ENCODE measurements at regions of chr5 and their contacts with region 1.

Region 1: GRCh38 chr5:159987031-159987674 is 21.8 kb upstream of the TTC1 start:
- DNase-seq: peak; percentile 72
- ATAC-seq: peak; percentile 99
- H3K4me3 Mint-ChIP-seq: peak overlapping the region; percentile 70
- H3K27ac Mint-ChIP-seq: no peak overlapping the region
- H3K4me1 Mint-ChIP-seq: peaks cover 7% of the 10 kb centered on the region
- H3K27me3 Mint-ChIP-seq: peaks cover 14% of the 10 kb centered on the region
- CTCF ChIP-seq: no peak

Region 2: DNA sequence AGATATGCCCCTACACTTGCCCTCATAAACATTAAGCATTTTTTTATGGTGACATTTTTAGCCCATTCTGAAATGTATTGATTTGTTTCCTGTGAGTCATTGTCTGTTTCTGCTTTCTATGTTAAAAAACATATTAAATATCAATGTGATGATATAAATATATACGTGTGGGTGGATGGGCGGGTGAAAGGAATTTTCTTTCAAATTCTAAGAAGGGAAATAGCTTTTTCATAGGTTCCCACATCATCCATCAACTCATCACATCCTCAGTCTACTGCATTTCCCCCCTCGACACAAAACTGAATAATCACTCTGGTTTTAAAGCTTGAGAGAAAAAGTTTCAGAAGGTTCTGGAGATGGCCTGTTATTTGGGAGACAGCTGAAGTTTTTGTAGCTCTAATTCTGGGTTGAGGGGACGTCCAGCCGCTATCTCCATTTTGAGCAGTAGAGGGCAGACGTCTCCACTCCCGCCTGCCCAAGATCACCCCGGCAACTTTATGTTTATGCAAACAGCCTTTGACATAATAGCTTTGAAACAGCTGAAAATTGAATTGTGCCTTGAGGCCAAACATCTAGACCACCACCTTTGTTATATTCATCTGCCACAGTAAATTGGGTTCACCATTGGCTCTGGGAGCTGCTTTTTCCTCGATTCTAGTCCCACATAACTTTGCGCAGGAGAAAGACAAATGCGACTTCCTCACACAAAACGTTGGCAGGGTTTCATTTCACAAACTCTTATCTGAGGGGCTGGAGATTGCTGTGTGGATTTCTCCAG is 1912.0 kb before region 1 on chr5:
- CTCF ChIA-PET with region 1: interaction called, 6 read pairs
- POLR2A ChIA-PET with region 1: no interaction called
- intact Hi-C with region 1: loop called (anchors 1 kb)
- DNase-seq: peak; percentile 48
- ATAC-seq: peak; percentile 95
- H3K4me3 Mint-ChIP-seq: peak overlapping the region; percentile 42
- H3K27ac Mint-ChIP-seq: peak overlapping the region; percentile 73
- H3K4me1 Mint-ChIP-seq: peaks cover 20% of the 10 kb centered on the region
- H3K27me3 Mint-ChIP-seq: peaks cover 2% of the 10 kb centered on the region
- CTCF ChIP-seq: no peak

Region 3: DNA sequence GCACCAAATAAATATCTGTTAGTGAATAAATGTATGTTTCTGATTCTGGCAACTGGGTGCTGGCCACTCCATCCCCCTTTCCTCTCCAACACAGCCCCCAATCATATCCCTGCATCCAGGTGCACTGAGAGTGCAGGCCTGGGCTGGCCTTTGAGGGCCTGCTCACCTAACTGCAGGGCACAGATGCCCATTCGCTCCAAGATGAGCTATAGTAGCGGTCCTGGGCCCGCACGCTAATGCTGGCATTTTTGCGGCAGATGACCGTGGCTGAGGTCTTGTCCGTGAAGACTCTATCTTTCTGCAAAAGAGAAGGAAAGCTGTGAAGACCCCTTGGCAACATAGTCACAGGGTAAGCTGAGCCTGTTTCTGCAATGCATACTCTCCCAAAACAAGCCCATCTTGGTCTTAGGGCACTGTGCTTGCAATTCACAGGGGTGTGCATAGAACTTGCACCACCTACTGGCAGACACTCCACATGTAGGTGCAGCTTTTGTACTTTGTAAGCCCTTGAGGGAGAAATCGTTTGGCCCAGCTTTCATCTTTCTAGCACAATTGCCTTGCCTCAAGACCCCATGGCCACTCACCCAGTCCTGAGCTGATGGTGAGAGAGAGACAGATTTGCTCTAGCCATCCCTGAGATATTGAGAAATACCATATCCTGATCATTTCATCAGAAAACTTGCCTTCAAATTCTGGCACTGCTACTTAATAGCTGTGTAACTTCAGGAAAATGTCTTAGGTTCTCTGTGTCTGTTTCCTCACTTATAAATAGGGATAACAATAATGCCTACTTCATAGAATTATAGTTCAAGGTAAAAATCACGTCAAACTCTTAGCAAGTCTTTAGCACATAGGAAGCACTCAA is 670.4 kb before region 1 on chr5:
- CTCF ChIA-PET with region 1: interaction called, 13 read pairs
- POLR2A ChIA-PET with region 1: no interaction called
- intact Hi-C with region 1: no loop called
- DNase-seq: no peak
- ATAC-seq: peak; percentile 67
- H3K4me3 Mint-ChIP-seq: no peak overlapping the region
- H3K27ac Mint-ChIP-seq: no peak overlapping the region
- H3K4me1 Mint-ChIP-seq: no peaks in the 10 kb centered on the region
- H3K27me3 Mint-ChIP-seq: peaks cover 6% of the 10 kb centered on the region
- CTCF ChIP-seq: no peak

Region 4: DNA sequence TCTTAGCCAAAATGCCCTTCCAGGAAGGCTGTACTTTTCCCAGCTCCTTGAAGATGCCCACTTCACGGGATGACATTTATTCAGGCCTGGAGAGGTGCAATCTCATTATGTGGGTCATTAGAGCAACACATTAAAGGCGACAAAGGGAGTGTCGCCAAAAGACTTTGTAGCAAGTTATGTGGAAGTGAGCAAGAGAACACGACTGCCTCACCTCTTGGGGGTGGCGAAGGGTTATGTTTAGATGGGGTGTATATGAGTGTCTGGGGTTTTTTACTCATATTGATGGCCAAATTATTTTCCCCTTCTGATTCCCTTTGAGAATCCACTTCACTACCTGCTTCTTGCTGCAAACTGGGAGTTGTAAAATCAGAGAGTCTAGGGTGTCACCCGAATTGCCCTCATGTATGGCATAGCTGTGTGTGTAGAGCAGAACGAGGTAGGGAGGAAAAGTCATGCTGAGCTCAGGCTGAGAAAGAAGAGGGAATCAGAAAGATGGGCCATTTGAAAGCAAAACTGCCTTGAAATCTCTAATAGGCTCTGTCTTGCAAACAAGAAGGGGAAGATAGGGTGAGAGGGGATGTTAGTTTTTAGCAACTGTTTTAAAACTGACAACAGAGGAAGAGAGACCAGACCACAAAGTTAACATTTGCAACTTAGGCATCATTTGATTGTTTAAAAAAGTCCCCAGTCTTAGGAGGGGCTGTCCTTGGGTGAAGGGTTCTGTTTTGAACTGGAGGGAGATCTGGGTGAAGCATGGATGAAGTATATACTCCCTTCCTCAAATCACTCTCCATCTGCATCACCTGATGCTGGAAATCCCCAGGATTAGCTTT is 559.8 kb before region 1 on chr5:
- CTCF ChIA-PET with region 1: interaction called, 10 read pairs
- POLR2A ChIA-PET with region 1: no interaction called
- intact Hi-C with region 1: no loop called
- DNase-seq: no peak
- ATAC-seq: peak; percentile 81
- H3K4me3 Mint-ChIP-seq: peak overlapping the region; percentile 76
- H3K27ac Mint-ChIP-seq: peak overlapping the region; percentile 96
- H3K4me1 Mint-ChIP-seq: peaks cover 64% of the 10 kb centered on the region
- H3K27me3 Mint-ChIP-seq: no peaks in the 10 kb centered on the region
- CTCF ChIP-seq: no peak

Region 5: DNA sequence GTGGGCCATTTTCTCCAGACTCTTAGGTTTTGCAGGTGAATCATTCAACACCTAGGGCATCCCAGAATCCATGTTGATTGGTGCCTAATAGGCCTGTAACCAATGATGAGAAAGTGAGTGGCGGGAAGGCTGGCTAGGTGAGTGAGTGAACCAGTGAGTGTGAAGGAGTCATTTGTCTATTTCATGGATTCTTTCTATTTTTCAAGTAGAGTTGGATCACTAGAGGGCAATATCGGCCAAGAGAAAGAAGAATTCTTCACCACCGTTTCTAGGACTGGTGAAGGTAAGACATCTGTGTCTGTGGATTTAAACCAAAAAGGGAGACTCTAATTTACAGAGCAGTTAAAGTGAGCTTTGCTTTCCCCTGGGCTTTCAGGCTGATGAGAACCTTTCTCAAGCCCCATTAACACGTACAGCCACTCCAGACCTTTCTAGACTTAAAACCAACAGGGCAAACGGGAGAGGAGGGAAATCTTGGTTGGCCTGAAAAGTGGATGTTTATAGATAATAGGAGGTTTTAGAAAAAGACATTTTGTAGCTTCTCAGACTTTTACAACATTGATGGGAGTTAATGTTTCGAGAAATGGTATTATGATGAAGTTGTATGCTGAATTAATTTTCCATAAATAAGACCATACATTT is 542.6 kb before region 1 on chr5:
- CTCF ChIA-PET with region 1: interaction called, 20 read pairs
- POLR2A ChIA-PET with region 1: interaction called, 4 read pairs
- intact Hi-C with region 1: loop called (anchors 1 kb)
- DNase-seq: no peak
- ATAC-seq: peak; percentile 67
- H3K4me3 Mint-ChIP-seq: no peak overlapping the region
- H3K27ac Mint-ChIP-seq: no peak overlapping the region
- H3K4me1 Mint-ChIP-seq: peaks cover 6% of the 10 kb centered on the region
- H3K27me3 Mint-ChIP-seq: no peaks in the 10 kb centered on the region
- CTCF ChIP-seq: no peak

Region 6: GRCh38 chr5:159515909-159516415 is 471.2 kb before region 1 on chr5:
- CTCF ChIA-PET with region 1: interaction called, 7 read pairs
- POLR2A ChIA-PET with region 1: no interaction called
- intact Hi-C with region 1: loop called (anchors 1 kb)
- DNase-seq: peak; percentile 58
- ATAC-seq: peak; percentile 99
- H3K4me3 Mint-ChIP-seq: no peak overlapping the region
- H3K27ac Mint-ChIP-seq: no peak overlapping the region
- H3K4me1 Mint-ChIP-seq: peaks cover 7% of the 10 kb centered on the region
- H3K27me3 Mint-ChIP-seq: no peaks in the 10 kb centered on the region
- CTCF ChIP-seq: peak; percentile 19

Region 7: DNA sequence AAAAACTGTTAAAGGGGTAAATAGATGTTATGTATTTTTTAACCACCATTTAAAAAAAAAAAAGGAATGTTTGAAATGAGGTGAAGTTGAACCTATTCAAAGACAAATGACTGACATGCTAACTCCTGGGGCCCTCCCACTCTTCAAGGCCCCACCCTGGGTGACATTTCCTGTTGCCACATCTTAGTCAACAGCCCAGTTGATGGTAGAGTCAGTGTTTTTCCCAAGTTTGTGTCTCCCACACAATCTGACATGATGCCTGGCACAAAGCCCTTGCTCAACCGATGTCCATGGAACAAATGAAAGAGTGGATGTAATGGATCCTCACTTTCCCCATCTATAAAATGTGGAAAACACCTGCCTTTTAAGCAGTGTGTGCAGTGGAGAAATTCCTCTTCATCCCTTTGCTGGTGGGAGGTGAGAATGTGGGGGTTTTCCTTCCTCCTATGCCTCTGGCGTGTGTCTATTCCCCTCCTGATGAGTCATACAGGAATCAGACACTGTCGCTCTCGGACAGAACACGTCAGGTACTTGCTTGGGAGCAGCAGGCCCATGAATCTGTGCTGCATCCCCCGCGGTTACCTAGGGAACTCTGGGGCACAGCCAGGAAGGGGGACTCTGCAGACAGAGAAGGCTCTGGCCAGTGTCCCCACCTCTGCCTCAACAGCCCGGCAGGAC is 84.6 kb before region 1 on chr5:
- CTCF ChIA-PET with region 1: no interaction called
- POLR2A ChIA-PET with region 1: no interaction called
- intact Hi-C with region 1: no loop called
- DNase-seq: no peak
- ATAC-seq: no peak
- H3K4me3 Mint-ChIP-seq: no peak overlapping the region
- H3K27ac Mint-ChIP-seq: no peak overlapping the region
- H3K4me1 Mint-ChIP-seq: no peaks in the 10 kb centered on the region
- H3K27me3 Mint-ChIP-seq: peaks cover 30% of the 10 kb centered on the region
- CTCF ChIP-seq: no peak

Region 8: DNA sequence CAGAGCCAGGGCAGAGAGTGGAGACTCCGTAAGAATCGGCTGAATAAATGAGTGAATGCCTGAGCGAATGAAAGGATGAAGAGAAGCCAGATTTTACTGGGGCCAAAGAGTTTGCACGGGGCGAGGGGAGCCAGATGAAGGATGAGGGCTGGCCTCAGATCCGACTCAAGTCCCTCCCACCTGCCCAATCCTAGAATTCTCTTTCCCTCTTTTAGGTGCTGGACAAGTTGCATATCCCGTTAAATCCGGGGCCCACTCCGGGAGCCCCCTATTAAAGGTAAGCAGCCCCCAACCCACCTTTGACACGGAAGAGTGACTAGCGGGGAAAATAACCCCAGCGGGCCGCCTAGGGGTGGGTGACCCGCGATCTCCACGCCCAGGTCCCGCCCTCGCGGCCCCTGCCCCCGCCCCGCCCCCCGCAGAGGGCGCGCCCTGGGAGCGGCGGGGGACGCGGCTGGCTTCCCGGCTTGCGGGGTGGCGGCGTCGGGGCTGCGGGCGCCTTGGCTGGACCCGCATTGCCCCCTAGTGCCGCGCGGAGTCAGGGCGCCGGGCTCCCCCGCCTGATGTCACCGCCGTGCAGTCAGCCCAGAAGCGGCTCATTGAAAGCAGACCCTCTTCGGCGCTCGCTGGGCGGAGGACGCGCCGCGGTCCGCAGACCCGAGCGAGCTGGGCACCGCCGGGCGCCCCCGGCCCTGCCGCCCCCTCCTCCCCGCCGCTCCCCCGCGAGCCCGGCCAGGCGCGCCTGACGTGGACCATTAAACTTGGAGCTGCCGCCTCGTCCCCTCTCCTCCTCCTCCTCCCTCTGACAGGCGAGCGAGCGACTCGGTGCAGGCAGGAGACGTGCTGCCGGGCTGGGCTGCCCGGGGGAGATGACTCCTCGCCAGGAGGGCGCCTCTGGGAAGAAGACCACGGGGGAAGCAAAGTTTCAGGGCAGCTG is 71.0 kb before region 1 on chr5 and contains the start of gene ADRA1B:
- CTCF ChIA-PET with region 1: interaction called, 5 read pairs
- POLR2A ChIA-PET with region 1: no interaction called
- intact Hi-C with region 1: loop called (anchors 1 kb)
- DNase-seq: peak; percentile 55
- ATAC-seq: peak; percentile 96
- H3K4me3 Mint-ChIP-seq: peak within 1 kb of the TSS; percentile 57
- H3K27ac Mint-ChIP-seq: no peak within 1 kb of the TSS
- H3K4me1 Mint-ChIP-seq: peaks cover 14% of the 10 kb centered on the region
- H3K27me3 Mint-ChIP-seq: peaks cover 29% of the 10 kb centered on the region
- CTCF ChIP-seq: no peak
- total RNA-seq, gene ADRA1B: 0.49 and 0.53 TPM in 2 replicates

Region 9: DNA sequence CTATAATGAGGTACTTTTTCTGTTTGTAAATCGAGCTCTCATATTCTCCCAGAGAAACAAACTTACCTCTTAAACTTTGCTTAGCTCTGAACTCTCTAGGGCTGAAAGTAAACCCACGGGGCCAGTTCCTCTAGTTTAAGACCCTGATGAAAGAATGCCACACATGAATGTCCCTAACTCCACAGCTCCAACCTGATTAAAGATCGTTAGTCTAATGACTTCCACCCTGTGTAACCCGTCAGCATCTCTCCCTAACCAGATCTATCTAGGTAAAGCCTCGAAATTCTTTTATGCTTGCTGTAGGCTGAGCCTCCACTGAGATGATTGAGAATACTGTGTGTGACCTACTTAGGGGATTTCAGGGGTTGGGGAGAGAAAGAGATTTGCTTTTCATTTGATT is 43.8 kb before region 1 on chr5:
- CTCF ChIA-PET with region 1: no interaction called
- POLR2A ChIA-PET with region 1: no interaction called
- intact Hi-C with region 1: no loop called
- DNase-seq: no peak
- ATAC-seq: no peak
- H3K4me3 Mint-ChIP-seq: no peak overlapping the region
- H3K27ac Mint-ChIP-seq: no peak overlapping the region
- H3K4me1 Mint-ChIP-seq: no peaks in the 10 kb centered on the region
- H3K27me3 Mint-ChIP-seq: peaks cover 18% of the 10 kb centered on the region
- CTCF ChIP-seq: no peak

Measured in activated B cell treated with CpG ODN at 0.5 μM for 24 hours (primary cell).